Esophagus squamous epithelium (tissue), 5 donors: ENCODE measurements at regions of chr2 and their contacts with region 1.

Region 1: DNA sequence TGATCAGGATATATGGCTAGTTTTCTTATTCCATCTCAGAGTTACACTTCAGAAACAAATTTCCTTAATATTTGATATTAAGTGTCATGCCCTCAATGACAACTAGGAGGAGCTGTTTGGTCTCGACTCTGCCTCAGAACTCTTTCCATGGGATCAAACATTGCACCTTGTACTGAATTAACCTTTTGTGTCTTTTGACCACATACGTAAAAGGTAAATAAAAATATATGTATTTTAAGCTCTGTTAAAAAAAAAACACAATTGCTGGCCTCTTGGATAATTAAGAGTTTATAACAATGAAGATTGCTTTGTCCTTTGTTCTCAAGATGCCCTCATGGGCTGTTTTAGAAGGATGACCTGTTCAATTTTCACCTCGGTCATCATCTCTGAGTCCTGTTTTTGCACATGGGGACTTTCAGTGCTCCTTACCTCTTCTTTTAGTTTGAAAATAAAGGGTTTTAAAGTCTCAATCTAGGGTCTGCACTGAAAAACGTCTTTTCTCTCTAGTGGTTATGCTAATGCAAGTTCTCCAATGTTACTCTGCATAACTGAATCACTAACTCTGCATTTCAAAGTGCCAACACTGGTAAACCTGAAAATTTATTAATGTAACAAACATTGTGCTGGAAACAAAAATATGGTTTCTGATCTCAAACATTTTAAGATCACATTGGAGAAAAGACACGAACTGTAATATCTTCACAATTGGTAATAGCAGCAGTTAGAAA is 18.8 kb upstream of the FN1 start:
- DNase-seq: no peak
- H3K4me3 ChIP-seq: no peak overlapping the region
- H3K27ac ChIP-seq: no peak overlapping the region
- H3K4me1 ChIP-seq: no peaks in the 10 kb centered on the region
- H3K27me3 ChIP-seq: peaks cover 0 to 6% (median 0%) of the 10 kb centered on the region in 4 donors
- CTCF ChIP-seq: peak; percentile 47 to 76 (median 70)
- POLR2A ChIP-seq: no peak

Region 2: GRCh38 chr2:215598376-215598975 is 143.8 kb after region 1 on chr2:
- intact Hi-C with region 1: no loop called
- DNase-seq: no peak
- H3K4me3 ChIP-seq: no peak overlapping the region
- H3K27ac ChIP-seq: no peak overlapping the region
- H3K4me1 ChIP-seq: no peaks in the 10 kb centered on the region
- H3K27me3 ChIP-seq: no peaks in the 10 kb centered on the region
- CTCF ChIP-seq: no peak
- POLR2A ChIP-seq: no peak

Region 3: DNA sequence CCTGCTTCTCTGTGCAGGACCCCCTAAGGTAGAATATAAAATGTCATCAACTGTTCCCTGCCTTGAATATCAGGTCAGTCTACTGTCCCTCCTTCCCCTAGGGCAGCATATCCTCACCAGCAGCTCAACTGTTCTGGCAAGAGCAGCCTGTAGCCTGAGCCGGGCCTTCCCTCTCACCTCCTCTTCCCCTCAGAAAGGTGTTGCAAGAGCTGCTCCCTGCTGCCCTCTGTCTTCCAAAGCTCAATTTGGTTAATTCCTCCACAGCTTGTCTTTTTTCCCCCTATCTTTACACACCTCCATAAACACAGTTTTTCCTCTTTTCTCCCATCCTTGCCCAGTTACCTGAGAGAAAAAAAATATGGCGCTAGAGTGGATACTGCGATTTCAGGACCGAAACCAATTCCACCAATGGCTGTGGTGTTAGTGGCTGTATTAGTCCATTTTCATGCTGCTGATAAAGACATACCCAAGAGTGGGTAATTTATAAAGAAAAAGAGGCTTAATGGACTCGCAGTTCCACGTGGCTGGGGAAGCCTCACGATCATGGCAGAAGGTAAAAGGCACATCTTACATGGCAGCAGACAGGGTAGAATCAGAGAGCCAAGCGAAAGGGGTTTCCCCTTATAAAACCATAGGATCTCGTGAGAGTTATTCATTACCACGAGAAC is 374.0 kb after region 1 on chr2:
- intact Hi-C with region 1: loop called (anchors 10 kb)
- DNase-seq: no peak
- H3K4me3 ChIP-seq: no peak overlapping the region
- H3K27ac ChIP-seq: no peak overlapping the region
- H3K4me1 ChIP-seq: peaks cover 4 to 18% (median 11%) of the 10 kb centered on the region in 3 donors
- H3K27me3 ChIP-seq: no peaks in the 10 kb centered on the region
- CTCF ChIP-seq: peak; percentile 36 to 62 (median 53)
- POLR2A ChIP-seq: no peak

Region 4: GRCh38 chr2:215917953-215918620 is 463.4 kb after region 1 on chr2:
- intact Hi-C with region 1: loop called (anchors 10 kb)
- DNase-seq: no peak
- H3K4me3 ChIP-seq: no peak overlapping the region
- H3K27ac ChIP-seq: peak overlapping the region in 3 of 4 donors; percentile 14 to 50 (median 42)
- H3K4me1 ChIP-seq: peaks cover 0 to 17% (median 5%) of the 10 kb centered on the region in 3 donors
- H3K27me3 ChIP-seq: no peaks in the 10 kb centered on the region
- CTCF ChIP-seq: no peak
- POLR2A ChIP-seq: no peak